Activated B cell treated with CpG ODN at 0.5 μM for 24 hours (primary cell): ENCODE measurements at regions of chrX and their contacts with region 1.

Region 1: GRCh38 chrX:96684339-96685209 is at the start of gene DIAPH2:
- DNase-seq: peak; percentile 69
- ATAC-seq: peak; percentile 78
- H3K4me3 Mint-ChIP-seq: peak within 1 kb of the TSS; percentile 91
- H3K27ac Mint-ChIP-seq: peak within 1 kb of the TSS; percentile 84
- H3K4me1 Mint-ChIP-seq: peaks cover 19% of the 10 kb centered on the region
- H3K27me3 Mint-ChIP-seq: no peaks in the 10 kb centered on the region
- CTCF ChIP-seq: no peak
- total RNA-seq, gene DIAPH2: 16.5 and 20.5 TPM in 2 replicates

Region 2: DNA sequence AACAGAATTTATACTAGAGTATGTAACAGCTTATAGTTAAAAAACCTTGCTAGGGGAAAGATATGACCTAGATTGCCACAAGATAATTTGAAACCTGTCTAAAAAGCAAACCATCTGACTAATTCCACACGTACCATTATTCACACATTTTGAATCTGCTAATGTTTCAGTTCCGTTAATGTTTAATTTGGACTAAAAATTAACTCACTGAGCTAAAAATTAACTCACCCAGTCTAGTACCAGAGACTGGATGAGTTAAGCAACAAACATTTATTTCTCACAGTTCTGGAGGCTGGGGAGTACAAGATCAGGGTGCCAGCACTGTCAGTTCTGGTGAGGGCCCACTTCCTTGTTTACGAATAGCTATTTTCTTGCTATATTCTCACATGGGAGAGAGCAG is 231.4 kb before region 1 on chrX:
- CTCF ChIA-PET with region 1: no interaction called
- POLR2A ChIA-PET with region 1: no interaction called
- intact Hi-C with region 1: loop called (anchors 10 kb)
- DNase-seq: no peak
- ATAC-seq: peak; percentile 54
- H3K4me3 Mint-ChIP-seq: no peak overlapping the region
- H3K27ac Mint-ChIP-seq: no peak overlapping the region
- H3K4me1 Mint-ChIP-seq: no peaks in the 10 kb centered on the region
- H3K27me3 Mint-ChIP-seq: no peaks in the 10 kb centered on the region
- CTCF ChIP-seq: no peak

Region 3: GRCh38 chrX:96721354-96721753 is 36.8 kb after region 1 on chrX:
- CTCF ChIA-PET with region 1: no interaction called
- POLR2A ChIA-PET with region 1: no interaction called
- intact Hi-C with region 1: loop called (anchors 2 kb)
- DNase-seq: no peak
- ATAC-seq: peak; percentile 77
- H3K4me3 Mint-ChIP-seq: no peak overlapping the region
- H3K27ac Mint-ChIP-seq: no peak overlapping the region
- H3K4me1 Mint-ChIP-seq: peaks cover 19% of the 10 kb centered on the region
- H3K27me3 Mint-ChIP-seq: no peaks in the 10 kb centered on the region
- CTCF ChIP-seq: no peak

Region 4: DNA sequence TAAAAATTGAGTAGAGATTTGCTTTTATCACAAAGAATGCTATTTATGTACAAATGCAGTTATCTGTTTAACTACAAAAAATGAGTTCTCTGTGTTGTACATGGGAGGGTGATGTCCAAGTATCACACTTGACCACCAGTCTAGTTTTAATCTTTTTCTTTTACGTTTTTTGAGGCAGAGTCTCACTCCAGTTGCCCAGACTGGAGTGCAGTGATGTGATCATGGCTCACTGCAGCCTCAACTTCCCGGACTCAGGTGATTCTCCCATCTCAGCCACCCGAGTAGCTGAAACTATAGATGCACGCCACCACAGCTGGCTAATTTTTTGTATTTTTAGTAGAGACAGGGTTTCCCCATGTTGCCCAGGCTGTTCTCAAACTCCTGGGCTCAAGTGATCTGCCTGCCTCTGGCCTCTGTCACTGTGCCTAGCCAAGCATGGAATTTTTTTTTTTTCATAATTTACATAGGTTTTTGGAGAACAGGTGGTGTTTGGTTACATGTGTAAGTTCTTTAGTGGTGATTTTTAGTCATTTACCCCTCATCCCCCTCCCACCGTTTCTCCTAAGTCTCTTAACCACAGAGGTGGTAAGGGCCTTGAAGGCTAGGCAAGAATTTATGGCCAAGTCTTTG is 151.2 kb after region 1 on chrX:
- CTCF ChIA-PET with region 1: no interaction called
- POLR2A ChIA-PET with region 1: no interaction called
- intact Hi-C with region 1: loop called (anchors 2 kb)
- DNase-seq: peak; percentile 24
- ATAC-seq: peak; percentile 87
- H3K4me3 Mint-ChIP-seq: peak overlapping the region; percentile 57
- H3K27ac Mint-ChIP-seq: peak overlapping the region; percentile 88
- H3K4me1 Mint-ChIP-seq: peaks cover 23% of the 10 kb centered on the region
- H3K27me3 Mint-ChIP-seq: no peaks in the 10 kb centered on the region
- CTCF ChIP-seq: no peak

Region 5: GRCh38 chrX:96909291-96909690 is 224.7 kb after region 1 on chrX:
- CTCF ChIA-PET with region 1: no interaction called
- POLR2A ChIA-PET with region 1: no interaction called
- intact Hi-C with region 1: no loop called
- DNase-seq: no peak
- ATAC-seq: no peak
- H3K4me3 Mint-ChIP-seq: no peak overlapping the region
- H3K27ac Mint-ChIP-seq: no peak overlapping the region
- H3K4me1 Mint-ChIP-seq: no peaks in the 10 kb centered on the region
- H3K27me3 Mint-ChIP-seq: no peaks in the 10 kb centered on the region
- CTCF ChIP-seq: no peak

Region 6: GRCh38 chrX:97563531-97564133 is 879.1 kb after region 1 on chrX:
- CTCF ChIA-PET with region 1: no interaction called
- POLR2A ChIA-PET with region 1: no interaction called
- intact Hi-C with region 1: loop called (anchors 5 kb)
- DNase-seq: peak; percentile 15
- ATAC-seq: peak; percentile 97
- H3K4me3 Mint-ChIP-seq: peak overlapping the region; percentile 77
- H3K27ac Mint-ChIP-seq: peak overlapping the region; percentile 84
- H3K4me1 Mint-ChIP-seq: peaks cover 10% of the 10 kb centered on the region
- H3K27me3 Mint-ChIP-seq: no peaks in the 10 kb centered on the region
- CTCF ChIP-seq: no peak